K562 (cell line): ENCODE measurements at regions of chr15 and their contacts with region 1.

Region 1: GRCh38 chr15:44066316-44066740 is 128.7 kb downstream of the FRMD5 start:
- DNase-seq: peak; percentile 54 to 80 (median 62)
- ATAC-seq: peak; percentile 90
- H3K4me3 ChIP-seq: no peak overlapping the region
- H3K27ac ChIP-seq: no peak overlapping the region
- H3K4me1 ChIP-seq: no peaks in the 10 kb centered on the region
- H3K27me3 ChIP-seq: no peaks in the 10 kb centered on the region; a peak in 1 of 5 replicates
- CTCF ChIP-seq: peak; percentile 63 to 86 (median 80)
- EP300 ChIP-seq: no peak
- POLR2A ChIP-seq: no peak
- RAD21 ChIP-seq: peak; percentile 65 to 83

Region 2: GRCh38 chr15:43872416-43873020 is 193.8 kb before region 1 on chr15:
- CTCF ChIA-PET with region 1: interaction called, 21 read pairs
- POLR2A ChIA-PET with region 1: no interaction called
- in situ Hi-C with region 1: no loop called
- intact Hi-C with region 1: no loop called
- DNase-seq: peak; percentile 54 to 68 (median 59)
- ATAC-seq: peak; percentile 91
- H3K4me3 ChIP-seq: no peak overlapping the region
- H3K27ac ChIP-seq: no peak overlapping the region
- H3K4me1 ChIP-seq: no peaks in the 10 kb centered on the region
- H3K27me3 ChIP-seq: no peaks in the 10 kb centered on the region
- CTCF ChIP-seq: peak; percentile 60 to 71 (median 63)
- EP300 ChIP-seq: no peak
- POLR2A ChIP-seq: no peak
- RAD21 ChIP-seq: peak; percentile 27 to 33; a peak in 2 of 4 replicates